MCF 10A (cell line): ENCODE measurements at regions of chrX and their contacts with region 1.

Region 1: GRCh38 chrX:112642349-112642748 is 37.4 kb downstream of the LHFPL1 start:
- DNase-seq: peak; percentile 74
- H3K4me3 Mint-ChIP-seq: no peak overlapping the region
- H3K27ac Mint-ChIP-seq: no peak overlapping the region
- H3K4me1 Mint-ChIP-seq: no peaks in the 10 kb centered on the region
- H3K27me3 Mint-ChIP-seq: peaks cover 56% of the 10 kb centered on the region
- CTCF ChIP-seq: peak; percentile 78

Region 2: DNA sequence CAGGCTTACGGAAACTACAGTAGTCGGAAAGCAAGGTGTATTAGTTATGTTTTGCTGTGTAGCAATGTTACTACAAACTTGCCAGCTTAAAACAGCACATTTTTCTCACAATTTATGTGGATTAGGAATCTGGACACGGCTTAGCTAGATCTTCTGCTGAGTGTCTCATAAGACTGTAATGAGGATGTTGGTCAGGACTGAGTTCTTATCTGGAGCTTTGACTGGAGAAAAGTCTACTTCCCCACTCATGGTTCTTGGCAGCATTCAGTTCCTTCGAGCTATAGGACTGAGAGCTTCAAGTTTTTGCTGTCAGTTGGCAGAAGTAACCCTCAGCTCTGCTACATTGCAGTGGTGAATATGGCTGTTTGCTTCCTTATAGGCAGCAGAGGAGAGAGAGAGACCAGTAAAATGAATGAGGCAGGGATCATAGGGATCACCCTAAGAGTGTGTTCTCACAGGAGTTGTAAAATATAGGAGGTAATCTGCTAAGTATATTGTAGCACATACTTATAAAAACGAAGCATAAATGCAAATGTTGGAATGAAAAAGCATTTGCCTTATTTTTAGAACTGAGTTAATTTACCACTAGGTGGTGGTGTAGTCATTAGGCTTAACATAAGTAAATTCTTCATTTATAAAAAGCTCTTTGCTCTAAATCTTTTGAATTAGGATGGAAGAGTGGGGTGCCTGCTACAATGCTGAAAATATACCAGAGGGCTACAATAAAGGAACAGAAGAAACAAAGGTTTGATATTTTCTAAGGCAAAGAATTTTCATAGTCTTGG is 922.7 kb before region 1 on chrX:
- CTCF ChIA-PET with region 1: interaction called, 21 read pairs
- POLR2A ChIA-PET with region 1: no interaction called
- intact Hi-C with region 1: loop called (anchors 5 kb)
- DNase-seq: peak; percentile 3
- H3K4me3 Mint-ChIP-seq: no peak overlapping the region
- H3K27ac Mint-ChIP-seq: no peak overlapping the region
- H3K4me1 Mint-ChIP-seq: peaks cover 5% of the 10 kb centered on the region
- H3K27me3 Mint-ChIP-seq: peaks cover 35% of the 10 kb centered on the region
- CTCF ChIP-seq: peak; percentile 39

Region 3: DNA sequence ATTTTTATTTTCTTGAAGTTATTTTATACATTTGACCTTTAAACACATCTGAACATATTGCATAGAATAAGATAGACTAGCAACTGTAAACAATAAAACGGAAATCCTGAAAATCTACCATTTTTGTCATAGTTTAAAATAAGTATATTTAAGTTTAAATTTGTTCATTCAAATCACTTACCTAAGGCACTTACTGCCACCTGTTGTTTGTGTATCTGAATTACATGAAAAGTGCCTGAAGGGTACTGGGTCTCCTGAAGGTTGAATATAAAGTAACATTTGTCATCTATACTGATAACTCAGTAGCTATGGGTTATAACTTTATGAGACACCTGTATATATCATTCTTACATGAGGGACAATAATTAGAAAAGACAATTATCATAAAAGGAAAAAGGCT is 598.4 kb before region 1 on chrX:
- CTCF ChIA-PET with region 1: no interaction called
- POLR2A ChIA-PET with region 1: no interaction called
- intact Hi-C with region 1: loop called (anchors 1 kb)
- DNase-seq: peak; percentile 42
- H3K4me3 Mint-ChIP-seq: no peak overlapping the region
- H3K27ac Mint-ChIP-seq: no peak overlapping the region
- H3K4me1 Mint-ChIP-seq: no peaks in the 10 kb centered on the region
- H3K27me3 Mint-ChIP-seq: peaks cover 77% of the 10 kb centered on the region
- CTCF ChIP-seq: peak; percentile 39

Region 4: DNA sequence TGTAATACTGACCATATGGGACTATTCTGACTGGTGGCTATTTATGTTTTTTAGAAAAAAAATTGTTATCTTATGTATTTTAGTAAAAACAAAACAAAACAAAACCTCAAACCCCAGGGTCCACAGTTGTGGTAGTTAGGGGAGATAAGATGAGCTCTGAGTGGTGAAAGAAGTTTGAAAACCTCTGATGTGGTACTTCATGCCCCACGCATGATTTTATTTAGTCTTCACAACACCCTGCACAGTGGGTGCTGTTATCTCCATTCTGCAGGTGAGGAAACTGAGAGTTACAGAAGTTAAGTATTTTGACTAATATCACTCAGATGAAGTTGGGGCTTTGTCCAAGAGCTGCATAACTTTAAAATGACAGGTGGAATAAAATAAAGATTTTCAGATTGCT is 329.1 kb before region 1 on chrX:
- CTCF ChIA-PET with region 1: interaction called, 3 read pairs
- POLR2A ChIA-PET with region 1: no interaction called
- intact Hi-C with region 1: loop called (anchors 5 kb)
- DNase-seq: no peak
- H3K4me3 Mint-ChIP-seq: no peak overlapping the region
- H3K27ac Mint-ChIP-seq: no peak overlapping the region
- H3K4me1 Mint-ChIP-seq: no peaks in the 10 kb centered on the region
- H3K27me3 Mint-ChIP-seq: peaks cover 73% of the 10 kb centered on the region
- CTCF ChIP-seq: no peak

Region 5: GRCh38 chrX:112653017-112653416 is 10.7 kb after region 1 on chrX:
- CTCF ChIA-PET with region 1: interaction called, 10 read pairs
- POLR2A ChIA-PET with region 1: no interaction called
- intact Hi-C with region 1: no loop called
- DNase-seq: no peak
- H3K4me3 Mint-ChIP-seq: no peak overlapping the region
- H3K27ac Mint-ChIP-seq: no peak overlapping the region
- H3K4me1 Mint-ChIP-seq: no peaks in the 10 kb centered on the region
- H3K27me3 Mint-ChIP-seq: peaks cover 22% of the 10 kb centered on the region
- CTCF ChIP-seq: no peak

Region 6: DNA sequence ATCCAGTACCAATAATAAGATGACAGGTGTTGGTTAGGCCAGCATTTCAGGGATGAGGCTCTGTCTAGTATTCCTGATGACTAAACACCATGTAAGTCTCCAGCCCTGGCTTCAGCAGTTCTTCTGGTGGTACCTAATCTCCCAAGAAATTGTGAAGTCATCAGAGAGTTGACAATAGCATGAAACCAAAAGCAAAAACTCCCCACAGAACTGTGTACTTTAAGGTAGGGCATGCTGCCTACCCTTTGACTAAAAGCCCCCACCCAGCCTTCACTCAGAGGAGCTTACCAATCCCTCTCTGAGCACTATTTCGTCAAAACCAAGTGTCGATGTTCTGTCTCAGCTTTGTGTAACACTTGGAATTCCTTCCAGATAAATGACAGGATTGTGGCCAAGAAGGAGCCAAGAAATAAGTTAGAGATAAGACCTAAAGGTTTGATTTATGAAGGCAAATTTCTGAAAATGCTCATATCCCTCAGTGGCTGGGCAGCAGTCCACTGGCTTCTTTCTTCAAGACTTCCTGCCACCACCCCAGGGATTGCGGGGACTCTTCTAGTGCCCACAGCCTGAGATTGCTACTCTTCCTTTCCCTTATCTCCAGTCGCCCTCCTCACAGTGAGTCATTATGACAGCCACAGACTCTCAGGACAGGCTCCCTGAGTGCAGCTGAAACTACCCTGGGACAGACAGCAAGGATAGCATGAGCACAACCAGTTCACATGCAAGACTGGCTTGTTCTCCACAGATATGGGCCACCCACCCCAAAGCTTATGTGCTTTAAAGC is 104.7 kb after region 1 on chrX:
- CTCF ChIA-PET with region 1: no interaction called
- POLR2A ChIA-PET with region 1: no interaction called
- intact Hi-C with region 1: no loop called
- DNase-seq: no peak
- H3K4me3 Mint-ChIP-seq: no peak overlapping the region
- H3K27ac Mint-ChIP-seq: no peak overlapping the region
- H3K4me1 Mint-ChIP-seq: no peaks in the 10 kb centered on the region
- H3K27me3 Mint-ChIP-seq: peaks cover 62% of the 10 kb centered on the region
- CTCF ChIP-seq: no peak

Region 7: DNA sequence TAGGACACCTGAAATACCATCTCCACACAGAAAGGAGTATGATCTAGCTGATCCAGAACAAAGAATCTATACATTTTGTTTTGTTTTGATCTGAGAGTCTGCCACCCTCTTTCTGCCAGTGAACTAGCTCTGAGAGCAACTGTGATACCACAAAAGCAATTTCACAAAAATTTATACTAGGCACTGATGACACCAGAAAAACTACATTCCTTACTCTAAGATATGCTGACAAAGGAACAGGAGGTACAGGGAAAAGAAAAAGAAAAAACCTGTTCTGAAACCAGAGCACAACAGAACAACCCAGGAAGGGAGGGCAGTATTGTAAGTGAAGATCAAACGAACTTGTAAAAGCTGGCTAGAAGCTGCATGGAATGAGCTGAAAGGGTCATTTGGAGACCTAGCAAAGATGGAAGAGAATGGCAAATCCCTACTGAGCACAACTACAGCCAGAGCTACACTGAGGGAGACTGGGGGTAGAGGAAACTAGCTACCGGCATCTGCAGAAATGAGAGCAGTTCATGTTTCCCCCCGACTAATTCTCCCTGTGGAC is 166.4 kb after region 1 on chrX:
- CTCF ChIA-PET with region 1: no interaction called
- POLR2A ChIA-PET with region 1: no interaction called
- intact Hi-C with region 1: no loop called
- DNase-seq: no peak
- H3K4me3 Mint-ChIP-seq: no peak overlapping the region
- H3K27ac Mint-ChIP-seq: no peak overlapping the region
- H3K4me1 Mint-ChIP-seq: no peaks in the 10 kb centered on the region
- H3K27me3 Mint-ChIP-seq: peaks cover 68% of the 10 kb centered on the region
- CTCF ChIP-seq: no peak

Region 8: GRCh38 chrX:112819010-112819640 is 176.8 kb after region 1 on chrX:
- CTCF ChIA-PET with region 1: no interaction called
- POLR2A ChIA-PET with region 1: no interaction called
- intact Hi-C with region 1: no loop called
- DNase-seq: peak; percentile 50
- H3K4me3 Mint-ChIP-seq: peak overlapping the region; percentile 69
- H3K27ac Mint-ChIP-seq: no peak overlapping the region
- H3K4me1 Mint-ChIP-seq: peaks cover 11% of the 10 kb centered on the region
- H3K27me3 Mint-ChIP-seq: peaks cover 77% of the 10 kb centered on the region
- CTCF ChIP-seq: no peak

Region 9: DNA sequence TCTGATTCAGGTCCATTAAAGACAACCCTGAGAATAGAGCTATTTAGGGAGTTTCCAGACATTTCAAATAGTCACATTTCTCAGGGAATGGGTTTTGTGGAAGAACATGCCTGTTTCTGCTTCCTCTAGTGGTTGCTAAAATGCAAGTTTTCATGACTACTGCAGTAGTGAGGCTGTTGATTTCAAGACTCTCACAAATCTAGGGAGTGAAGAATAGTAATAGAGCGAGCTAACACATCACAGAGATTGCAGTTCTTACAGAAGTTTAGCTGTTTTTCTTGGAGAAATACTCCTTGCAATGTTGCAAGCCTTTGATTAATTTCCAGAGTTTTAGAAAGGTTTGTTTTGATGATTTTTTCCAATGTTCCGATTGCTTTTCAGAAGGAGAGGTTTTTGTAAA is 1331.4 kb after region 1 on chrX:
- CTCF ChIA-PET with region 1: no interaction called
- POLR2A ChIA-PET with region 1: no interaction called
- intact Hi-C with region 1: no loop called
- DNase-seq: no peak
- H3K4me3 Mint-ChIP-seq: no peak overlapping the region
- H3K27ac Mint-ChIP-seq: no peak overlapping the region
- H3K4me1 Mint-ChIP-seq: no peaks in the 10 kb centered on the region
- H3K27me3 Mint-ChIP-seq: peaks cover 57% of the 10 kb centered on the region
- CTCF ChIP-seq: no peak